Uterus (tissue), 4 donors: ENCODE measurements at regions of chr6 and their contacts with region 1.

Region 1: GRCh38 chr6:31366693-31367470 is 9.9 kb upstream of the HLA-B start:
- DNase-seq: peak; percentile 88 to 89
- H3K4me3 ChIP-seq: peak overlapping the region in 1 of 2 donors; percentile 24
- H3K27ac ChIP-seq: no peak overlapping the region
- H3K4me1 ChIP-seq: no peaks in the 10 kb centered on the region
- H3K27me3 ChIP-seq: no peaks in the 10 kb centered on the region
- CTCF ChIP-seq: peak; percentile 88 to 97 (median 92)
- POLR2A ChIP-seq: peak in 1 of 2 donors; percentile 23

Region 2: GRCh38 chr6:31271641-31272357 is 95.1 kb before region 1 on chr6 and contains the start of gene HLA-C:
- intact Hi-C with region 1: loop called (anchors 10 kb)
- DNase-seq: peak; percentile 92 to 96
- H3K4me3 ChIP-seq: peak within 1 kb of the TSS; percentile 32 to 93
- H3K27ac ChIP-seq: peak within 1 kb of the TSS; percentile 76 to 100
- H3K4me1 ChIP-seq: peaks cover 0 to 3% of the 10 kb centered on the region in 2 donors
- H3K27me3 ChIP-seq: no peaks in the 10 kb centered on the region
- CTCF ChIP-seq: no peak
- POLR2A ChIP-seq: peak; percentile 91 to 92
- total RNA-seq, gene HLA-C: 209 to 650 (median 336) TPM